ENCODE measurements at regions of chr5 and their contacts with region 1.

Region 1: DNA sequence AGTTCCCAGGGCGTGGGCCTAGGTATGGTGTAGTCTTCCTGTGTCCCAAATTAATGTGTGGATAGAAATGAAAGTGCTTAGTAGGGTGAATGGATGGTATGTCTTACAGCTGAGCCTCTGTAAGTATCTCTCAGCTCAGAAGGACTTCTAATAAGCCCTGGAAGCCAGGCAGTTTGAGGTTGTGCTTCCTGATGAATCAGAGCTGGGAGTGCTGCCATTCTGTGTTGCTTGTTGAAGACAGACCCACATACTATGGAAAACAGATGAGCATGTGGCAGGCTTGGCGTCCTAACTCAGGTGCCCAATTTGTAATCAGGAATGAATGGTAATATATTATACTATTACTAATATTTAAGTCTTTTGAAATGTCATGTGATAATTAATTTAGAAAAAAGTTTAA is 69.8 kb downstream of the CMYA5 start:
- DNase-seq: no peak
- H3K4me3 ChIP-seq: no peak overlapping the region
- H3K27ac ChIP-seq: no peak overlapping the region
- H3K4me1 ChIP-seq: no peaks in the 10 kb centered on the region
- H3K27me3 ChIP-seq: no peaks in the 10 kb centered on the region
- CTCF ChIP-seq: no peak
- EP300 ChIP-seq: no peak
- POLR2A ChIP-seq: no peak
- RAD21 ChIP-seq: no peak

Region 2: DNA sequence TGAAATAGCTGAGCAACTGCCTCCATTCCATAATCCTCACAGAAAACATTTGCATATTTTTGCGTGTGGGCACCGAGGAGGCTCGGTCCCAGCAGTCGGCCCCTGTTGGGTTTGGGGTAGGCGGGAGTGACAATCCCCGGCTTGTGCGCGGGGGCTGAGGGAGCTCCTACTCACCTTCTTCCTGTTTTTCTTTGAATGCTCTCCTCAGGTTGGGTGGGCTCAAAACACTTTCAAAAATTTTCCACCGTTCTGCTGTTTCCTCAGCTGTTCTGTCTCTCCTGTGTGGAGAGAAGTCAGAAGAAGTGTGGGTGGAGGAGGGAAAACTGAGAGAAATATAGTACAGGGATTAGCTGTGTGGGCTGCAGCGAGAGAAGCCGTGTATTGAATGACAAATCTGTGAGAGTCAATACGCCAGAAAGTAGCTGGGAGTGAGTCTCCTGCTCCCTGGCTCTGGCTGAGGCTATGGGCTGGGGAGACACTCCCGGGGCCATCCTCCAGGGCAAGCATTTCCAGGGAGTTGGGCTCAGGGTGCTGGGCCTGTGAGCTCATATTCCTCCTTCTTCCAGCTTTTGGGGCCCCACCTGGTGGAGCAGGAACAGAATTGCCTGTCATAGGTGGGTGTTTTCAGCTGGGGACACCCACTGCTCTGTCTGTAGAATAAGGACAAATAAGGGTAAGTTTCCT is 14.9 kb after region 1 on chr5:
- CTCF ChIA-PET with region 1: interaction called, 37 read pairs
- POLR2A ChIA-PET with region 1: no interaction called
- DNase-seq: peak; percentile 76 to 83
- H3K4me3 ChIP-seq: no peak overlapping the region
- H3K27ac ChIP-seq: no peak overlapping the region
- H3K4me1 ChIP-seq: peaks cover 0 to 4% (median 0%) of the 10 kb centered on the region in 4 experiments; a peak in 3 of 7 replicates
- H3K27me3 ChIP-seq: no peaks in the 10 kb centered on the region
- CTCF ChIP-seq: peak; percentile 62 to 91 (median 81)
- EP300 ChIP-seq: no peak
- POLR2A ChIP-seq: no peak
- RAD21 ChIP-seq: peak; percentile 80 to 87

Measured in H1 (cell line).